HEK293 (cell line): ENCODE measurements at regions of chr1 and their contacts with region 1.

Region 1: GRCh38 chr1:156625436-156626078 is 6.3 kb downstream of the HAPLN2 start:
- H3K4me3 ChIP-seq: peak overlapping the region; percentile 26
- H3K27ac ChIP-seq: no peak overlapping the region; the same call in 1 of the 2 replicates
- H3K4me1 ChIP-seq: no peaks in the 10 kb centered on the region
- CTCF ChIP-seq: peak; percentile 88

Region 2: GRCh38 chr1:156583821-156584622 is 41.5 kb before region 1 on chr1:
- CTCF ChIA-PET with region 1: interaction called, 13 read pairs
- POLR2A ChIA-PET with region 1: no interaction called
- H3K4me3 ChIP-seq: no peak overlapping the region
- H3K27ac ChIP-seq: no peak overlapping the region
- H3K4me1 ChIP-seq: no peaks in the 10 kb centered on the region
- CTCF ChIP-seq: peak; percentile 69

Region 3: GRCh38 chr1:156641761-156642264 is 16.3 kb after region 1 on chr1 and contains the start of gene BCAN:
- CTCF ChIA-PET with region 1: interaction called, 79 read pairs
- POLR2A ChIA-PET with region 1: interaction called, 4 read pairs
- H3K4me3 ChIP-seq: peak within 1 kb of the TSS; percentile 16; the same call in 1 of the 2 replicates
- H3K27ac ChIP-seq: no peak within 1 kb of the TSS
- H3K4me1 ChIP-seq: no peaks in the 10 kb centered on the region
- CTCF ChIP-seq: no peak

Region 4: GRCh38 chr1:156652131-156652991 is 26.8 kb after region 1 on chr1:
- CTCF ChIA-PET with region 1: interaction called, 294 read pairs
- POLR2A ChIA-PET with region 1: interaction called, 6 read pairs
- H3K4me3 ChIP-seq: no peak overlapping the region
- H3K27ac ChIP-seq: no peak overlapping the region
- H3K4me1 ChIP-seq: no peaks in the 10 kb centered on the region; the same call in 1 of the 2 replicates
- CTCF ChIP-seq: no peak

Region 5: DNA sequence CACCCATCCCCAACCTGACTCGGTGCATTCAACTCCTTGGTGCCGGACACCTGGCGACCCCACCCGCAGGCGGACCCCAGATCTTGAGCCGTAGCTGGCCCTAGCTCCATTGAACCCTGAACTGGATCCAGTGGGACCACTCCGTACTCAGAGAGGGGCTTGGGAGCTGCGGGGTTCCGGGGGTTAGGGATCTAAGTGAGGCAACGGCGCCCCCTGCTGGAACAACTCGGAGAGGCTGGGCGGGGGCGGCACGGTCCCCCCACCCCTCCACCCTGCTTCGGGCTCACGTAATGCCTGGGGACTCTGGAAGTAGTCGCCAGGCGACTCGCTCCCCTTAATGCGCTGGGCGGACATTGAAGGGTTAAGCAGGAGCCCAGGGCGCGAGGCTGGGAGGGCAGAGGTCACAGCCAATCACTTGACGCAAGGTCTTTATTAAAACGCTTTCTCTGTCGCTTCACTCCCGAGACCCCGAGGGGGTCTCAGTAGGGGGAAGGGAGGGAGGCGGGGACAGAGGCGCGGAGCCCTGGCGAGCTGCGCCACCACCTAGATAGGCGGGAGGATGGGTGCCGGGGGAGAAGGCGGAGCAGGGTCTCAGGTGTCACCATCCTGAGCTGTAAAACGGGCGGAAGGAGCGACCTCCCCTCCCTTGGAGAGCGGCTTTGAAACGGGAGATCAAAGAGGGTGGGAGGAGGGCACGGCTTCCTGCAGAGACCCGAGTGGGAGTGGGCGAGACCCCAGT is 80.5 kb after region 1 on chr1:
- CTCF ChIA-PET with region 1: interaction called, 14 read pairs
- POLR2A ChIA-PET with region 1: interaction called, 3 read pairs
- H3K4me3 ChIP-seq: peak overlapping the region; percentile 36
- H3K27ac ChIP-seq: peak overlapping the region; percentile 39; the same call in 1 of the 2 replicates
- H3K4me1 ChIP-seq: peaks cover 12% of the 10 kb centered on the region
- CTCF ChIP-seq: peak; percentile 92